ENCODE measurements at regions of chr2 and their contacts with region 1.

Region 1: DNA sequence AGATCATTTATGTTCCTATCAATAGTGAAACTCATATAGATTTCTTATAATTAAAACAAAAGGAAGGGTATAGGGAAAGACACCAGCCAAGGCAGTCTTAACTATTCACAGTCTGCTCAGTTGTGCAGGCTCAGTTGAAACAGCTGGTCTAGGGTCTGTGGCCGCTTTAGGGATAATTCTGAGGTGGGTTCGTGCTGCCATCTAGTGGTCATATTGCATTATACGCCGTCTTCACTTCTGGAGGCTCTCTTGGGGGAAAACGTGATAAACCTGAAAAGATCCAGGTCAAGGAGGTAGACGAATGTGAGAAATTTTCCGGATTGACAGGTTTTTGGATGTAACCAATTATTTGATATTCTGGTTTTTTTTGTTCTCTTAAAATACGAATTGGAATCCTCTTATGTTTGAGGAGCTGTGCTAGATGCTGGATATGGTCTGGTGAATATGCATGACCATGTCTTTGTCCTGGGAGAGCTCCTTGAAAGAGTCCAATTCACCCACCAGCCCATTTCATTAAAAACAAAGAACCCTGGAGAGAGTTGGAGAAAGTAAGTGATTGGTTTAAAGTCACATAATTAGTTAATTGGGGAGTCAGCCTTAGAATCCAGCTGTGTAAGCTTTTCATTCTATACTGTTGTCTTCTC is 492.4 kb downstream of the PLCL1 start:
- DNase-seq: peak in 2 of 3 donors; percentile 29 to 52
- ATAC-seq: peak; percentile 73 to 79
- H3K4me3 ChIP-seq: no peak overlapping the region
- H3K27ac ChIP-seq: no peak overlapping the region
- H3K4me1 ChIP-seq: no peaks in the 10 kb centered on the region
- H3K27me3 ChIP-seq: no peaks in the 10 kb centered on the region

Region 2: DNA sequence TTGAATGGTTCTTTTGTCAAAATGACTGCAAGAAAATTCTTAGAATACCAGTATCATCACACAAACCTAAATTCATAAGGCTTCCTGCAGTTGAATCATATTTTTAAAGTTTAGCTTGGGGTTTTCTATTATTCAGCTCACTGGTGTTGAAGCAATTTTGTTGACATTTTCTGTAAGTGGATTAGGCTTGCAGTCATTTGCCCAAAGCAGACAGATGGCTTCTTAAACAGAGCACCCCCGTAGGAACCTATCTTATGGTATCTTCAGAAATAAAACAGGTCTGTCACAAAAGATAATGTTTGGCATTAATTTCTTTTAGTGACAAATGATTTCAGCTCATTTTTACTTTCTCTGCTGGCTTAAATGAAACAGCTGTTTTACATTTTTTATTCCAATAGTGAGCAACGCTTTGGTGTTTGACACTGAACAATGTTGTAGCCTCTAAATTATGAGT is 161.3 kb before region 1 on chr2:
- intact Hi-C with region 1: loop called in 1 of 4 experiments (anchors 10 kb)
- DNase-seq: no peak
- ATAC-seq: no peak
- H3K4me3 ChIP-seq: no peak overlapping the region
- H3K27ac ChIP-seq: no peak overlapping the region
- H3K4me1 ChIP-seq: peaks cover 4% of the 10 kb centered on the region
- H3K27me3 ChIP-seq: no peaks in the 10 kb centered on the region

Measured in right cardiac atrium (tissue), 5 donors.